ENCODE measurements at regions of chr19 and their contacts with region 1.

Region 1: GRCh38 chr19:34712395-34713261 is 21.4 kb upstream of the ZNF181 start:
- DNase-seq: peak in 1 of 3 donors; percentile 17
- ATAC-seq: peak; percentile 72 to 75
- H3K4me3 ChIP-seq: no peak overlapping the region
- H3K27ac ChIP-seq: no peak overlapping the region
- H3K4me1 ChIP-seq: no peaks in the 10 kb centered on the region
- H3K27me3 ChIP-seq: no peaks in the 10 kb centered on the region

Region 2: GRCh38 chr19:34501339-34502320 is 211.0 kb before region 1 on chr19:
- intact Hi-C with region 1: loop called in 3 of 4 experiments (anchors 5 kb)
- DNase-seq: peak; percentile 94 to 97 (median 97)
- ATAC-seq: peak; percentile 83 to 87
- H3K4me3 ChIP-seq: no peak overlapping the region
- H3K27ac ChIP-seq: no peak overlapping the region
- H3K4me1 ChIP-seq: no peaks in the 10 kb centered on the region
- H3K27me3 ChIP-seq: no peaks in the 10 kb centered on the region

Region 3: DNA sequence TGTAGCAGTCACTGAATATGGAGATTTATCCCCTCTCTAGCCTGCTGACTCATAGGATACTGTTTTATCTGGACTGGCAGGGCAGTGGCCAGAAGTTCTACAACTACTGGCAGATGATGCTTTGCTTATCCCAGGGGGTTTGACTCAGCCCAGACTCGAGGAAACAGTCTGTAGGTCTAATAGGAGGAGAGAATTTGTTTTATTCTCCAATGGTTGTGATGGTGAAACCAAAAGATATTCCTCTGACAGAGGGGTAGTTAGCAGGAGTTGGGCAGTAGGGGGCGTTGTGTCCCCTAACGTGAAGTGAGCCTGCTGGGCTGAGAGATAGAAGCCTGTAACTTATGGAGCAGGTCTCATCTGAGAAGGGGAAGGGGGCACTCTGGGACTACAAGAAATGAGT is 156.1 kb before region 1 on chr19:
- intact Hi-C with region 1: loop called in 1 of 4 experiments (anchors 10 kb)
- DNase-seq: peak; percentile 52 to 76 (median 70)
- ATAC-seq: peak; percentile 76 to 77
- H3K4me3 ChIP-seq: no peak overlapping the region
- H3K27ac ChIP-seq: no peak overlapping the region
- H3K4me1 ChIP-seq: peaks cover 1% of the 10 kb centered on the region
- H3K27me3 ChIP-seq: no peaks in the 10 kb centered on the region

Region 4: DNA sequence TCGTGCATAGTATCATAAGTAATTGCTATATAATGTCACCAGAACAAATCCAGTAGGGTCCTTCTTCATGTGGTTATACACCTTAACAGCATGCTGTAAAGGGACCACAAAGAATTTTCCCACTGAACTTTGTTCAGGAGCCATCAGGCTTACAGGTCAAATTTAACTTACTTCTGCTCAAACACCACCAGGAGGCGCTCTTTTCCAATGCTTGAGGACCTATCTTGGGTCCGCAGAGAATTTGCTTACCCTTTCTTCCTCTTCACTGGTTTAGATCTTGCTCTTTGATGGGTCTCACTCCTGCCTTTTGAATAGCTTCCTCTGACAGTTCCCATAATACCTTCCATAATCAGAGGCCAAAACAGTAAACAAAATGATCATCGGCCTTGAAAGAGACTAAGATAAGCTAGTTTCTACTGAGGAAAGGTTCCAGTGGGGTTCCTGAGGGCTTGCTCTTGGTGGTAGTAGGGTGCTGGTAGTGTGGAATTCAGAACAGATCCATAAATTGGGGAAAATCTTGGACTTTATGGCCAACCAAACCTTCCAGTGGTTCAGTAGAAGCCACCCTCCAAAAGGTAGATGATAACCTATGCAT is 73.0 kb before region 1 on chr19:
- intact Hi-C with region 1: loop called in 3 of 4 experiments (anchors 1 to 5 kb)
- DNase-seq: peak in 1 of 3 donors; percentile 50
- ATAC-seq: peak in 1 of 2 donors; percentile 57
- H3K4me3 ChIP-seq: no peak overlapping the region
- H3K27ac ChIP-seq: no peak overlapping the region
- H3K4me1 ChIP-seq: no peaks in the 10 kb centered on the region
- H3K27me3 ChIP-seq: no peaks in the 10 kb centered on the region

Region 5: GRCh38 chr19:34645551-34645950 is 67.1 kb before region 1 on chr19:
- intact Hi-C with region 1: loop called in 3 of 4 experiments (anchors 1 to 5 kb)
- DNase-seq: no peak
- ATAC-seq: peak; percentile 20 to 60
- H3K4me3 ChIP-seq: no peak overlapping the region
- H3K27ac ChIP-seq: no peak overlapping the region
- H3K4me1 ChIP-seq: peaks cover 3% of the 10 kb centered on the region
- H3K27me3 ChIP-seq: no peaks in the 10 kb centered on the region

Measured in right cardiac atrium (tissue), 5 donors.